CD8-positive, alpha-beta T cell (primary cell): ENCODE measurements at regions of chr7 and their contacts with region 1.

Region 1: DNA sequence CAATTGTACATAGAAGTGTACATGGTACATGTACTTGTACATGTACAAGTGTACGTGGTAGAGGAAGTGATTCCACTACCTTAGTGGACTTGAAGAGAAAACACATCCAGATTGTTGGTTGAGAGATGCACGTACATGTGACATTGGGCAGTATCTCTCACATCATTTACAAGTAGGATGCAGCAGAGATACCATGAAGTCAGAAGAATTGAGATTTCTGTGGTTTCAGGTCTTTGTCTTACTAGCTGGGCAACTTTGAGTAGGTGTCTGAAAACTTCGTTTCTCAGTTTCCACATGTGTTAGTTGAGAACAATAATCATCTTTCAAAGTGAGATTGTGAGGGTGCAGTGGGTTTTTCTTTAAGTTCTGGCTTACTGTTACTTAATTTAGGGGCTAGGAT is 21.5 kb downstream of the CLDN12 start:
- DNase-seq: no peak
- ATAC-seq: no peak
- H3K4me3 ChIP-seq: no peak overlapping the region
- H3K4me3 Mint-ChIP-seq: no peak overlapping the region
- H3K27ac ChIP-seq: no peak overlapping the region
- H3K27ac Mint-ChIP-seq: no peak overlapping the region
- H3K4me1 ChIP-seq: no peaks in the 10 kb centered on the region
- H3K4me1 Mint-ChIP-seq: no peaks in the 10 kb centered on the region
- H3K27me3 ChIP-seq: no peaks in the 10 kb centered on the region
- H3K27me3 Mint-ChIP-seq: peaks cover 2% of the 10 kb centered on the region
- CTCF ChIP-seq: no peak

Region 2: DNA sequence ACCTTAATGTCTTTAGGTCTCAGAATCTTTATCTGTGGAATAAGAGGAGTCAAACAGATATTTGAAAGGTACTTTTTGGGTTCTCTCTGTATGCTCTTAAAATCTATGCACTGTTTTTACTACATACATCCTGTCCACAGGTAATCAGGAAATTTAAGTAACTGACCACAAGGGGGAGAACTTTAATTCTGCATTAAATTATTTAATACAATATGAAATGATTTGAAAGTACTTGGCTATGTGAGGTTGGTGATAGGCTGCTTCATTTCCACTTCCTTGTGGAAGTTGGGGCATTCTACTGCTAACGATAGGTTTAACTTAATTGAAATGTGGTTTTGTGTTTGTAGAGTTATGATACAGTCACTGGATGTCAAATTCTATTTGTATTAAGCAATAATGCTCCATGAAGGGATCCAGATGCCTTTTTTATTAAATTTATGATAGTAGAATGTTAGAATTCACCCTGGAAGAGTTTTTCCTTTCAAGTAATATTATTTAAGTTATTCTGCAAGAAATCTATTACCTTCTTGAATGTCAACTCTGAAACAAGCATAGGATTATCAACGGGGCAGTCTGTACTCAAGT is 1635.1 kb before region 1 on chr7:
- CTCF ChIA-PET with region 1: no interaction called
- POLR2A ChIA-PET with region 1: no interaction called
- intact Hi-C with region 1: loop called in 1 of 2 experiments (anchors 5 kb)
- DNase-seq: peak in 2 of 9 experiments; percentile 6 to 26
- ATAC-seq: no peak
- H3K4me3 ChIP-seq: no peak overlapping the region
- H3K4me3 Mint-ChIP-seq: no peak overlapping the region
- H3K27ac ChIP-seq: no peak overlapping the region
- H3K27ac Mint-ChIP-seq: no peak overlapping the region
- H3K4me1 ChIP-seq: no peaks in the 10 kb centered on the region
- H3K4me1 Mint-ChIP-seq: no peaks in the 10 kb centered on the region
- H3K27me3 ChIP-seq: no peaks in the 10 kb centered on the region
- H3K27me3 Mint-ChIP-seq: no peaks in the 10 kb centered on the region
- CTCF ChIP-seq: peak; percentile 69

Region 3: DNA sequence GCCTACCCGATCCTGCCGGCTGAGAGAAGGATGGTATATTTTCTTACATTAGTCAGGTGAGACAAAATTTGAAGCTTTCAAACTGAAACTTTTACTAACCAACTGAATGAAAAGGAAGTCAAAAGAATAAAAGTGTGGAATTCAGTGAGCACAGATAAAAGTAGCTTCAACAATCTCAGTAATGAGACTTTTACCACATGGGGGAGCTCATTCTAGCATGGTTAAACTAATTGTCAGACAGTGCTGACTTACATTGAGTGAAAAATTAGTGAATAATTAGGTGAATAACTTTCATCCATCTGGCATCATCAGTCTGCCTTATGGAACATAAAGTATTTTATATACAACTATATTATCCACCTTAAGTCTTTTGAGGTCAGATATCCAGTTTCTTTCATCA is 112.0 kb before region 1 on chr7:
- CTCF ChIA-PET with region 1: interaction called, 18 read pairs
- POLR2A ChIA-PET with region 1: no interaction called
- intact Hi-C with region 1: loop called (anchors 1 kb)
- DNase-seq: peak in 2 of 9 experiments; percentile 22 to 27
- ATAC-seq: no peak
- H3K4me3 ChIP-seq: no peak overlapping the region
- H3K4me3 Mint-ChIP-seq: no peak overlapping the region
- H3K27ac ChIP-seq: no peak overlapping the region
- H3K27ac Mint-ChIP-seq: no peak overlapping the region
- H3K4me1 ChIP-seq: no peaks in the 10 kb centered on the region
- H3K4me1 Mint-ChIP-seq: no peaks in the 10 kb centered on the region
- H3K27me3 ChIP-seq: no peaks in the 10 kb centered on the region
- H3K27me3 Mint-ChIP-seq: peaks cover 31% of the 10 kb centered on the region
- CTCF ChIP-seq: peak; percentile 12

Region 4: GRCh38 chr7:90346336-90347125 is 78.2 kb before region 1 on chr7 and contains the start of gene GTPBP10:
- CTCF ChIA-PET with region 1: no interaction called
- POLR2A ChIA-PET with region 1: no interaction called
- intact Hi-C with region 1: no loop called
- DNase-seq: peak; percentile 91 to 98 (median 95)
- ATAC-seq: peak; percentile 93
- H3K4me3 ChIP-seq: peak within 1 kb of the TSS; percentile 77 to 81
- H3K4me3 Mint-ChIP-seq: peak within 1 kb of the TSS; percentile 98
- H3K27ac ChIP-seq: peak within 1 kb of the TSS; percentile 92 to 97
- H3K27ac Mint-ChIP-seq: peak within 1 kb of the TSS; percentile 100
- H3K4me1 ChIP-seq: peaks cover 22% of the 10 kb centered on the region
- H3K4me1 Mint-ChIP-seq: peaks cover 56% of the 10 kb centered on the region
- H3K27me3 ChIP-seq: no peaks in the 10 kb centered on the region
- H3K27me3 Mint-ChIP-seq: no peaks in the 10 kb centered on the region
- CTCF ChIP-seq: peak; percentile 71
- total RNA-seq, gene GTPBP10: 15.3 to 18.3 TPM

Region 5: DNA sequence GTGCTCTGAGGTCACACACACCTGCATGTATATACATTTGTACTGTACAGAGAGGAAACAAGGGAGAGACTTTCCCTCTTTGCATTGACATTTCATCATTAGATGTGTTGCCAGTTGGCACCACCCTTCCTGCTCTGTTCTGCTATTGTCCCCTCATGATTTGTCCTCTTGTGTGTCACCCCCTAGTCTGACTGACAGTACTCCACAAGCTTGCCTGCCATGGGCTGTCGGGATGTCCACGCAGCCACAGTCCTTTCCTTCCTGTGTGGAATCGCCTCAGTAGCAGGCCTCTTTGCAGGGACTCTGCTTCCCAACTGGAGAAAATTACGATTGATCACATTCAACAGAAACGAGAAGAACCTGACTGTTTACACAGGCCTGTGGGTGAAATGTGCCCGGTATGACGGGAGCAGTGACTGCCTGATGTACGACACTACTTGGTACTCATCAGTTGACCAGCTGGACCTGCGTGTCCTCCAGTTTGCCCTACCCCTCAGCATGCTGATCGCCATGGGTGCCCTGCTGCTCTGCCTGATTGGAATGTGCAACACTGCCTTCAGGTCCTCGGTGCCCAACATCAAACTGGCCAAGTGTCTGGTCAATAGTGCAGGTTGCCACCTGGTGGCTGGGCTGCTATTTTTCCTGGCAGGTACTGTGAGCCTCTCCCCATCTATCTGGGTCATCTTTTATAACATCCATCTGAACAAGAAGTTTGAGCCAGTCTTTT is 12.1 kb before region 1 on chr7:
- CTCF ChIA-PET with region 1: interaction called, 31 read pairs
- POLR2A ChIA-PET with region 1: no interaction called
- intact Hi-C with region 1: no loop called
- DNase-seq: peak in 5 of 9 experiments; percentile 17 to 44 (median 31)
- ATAC-seq: no peak
- H3K4me3 ChIP-seq: no peak overlapping the region
- H3K4me3 Mint-ChIP-seq: no peak overlapping the region
- H3K27ac ChIP-seq: no peak overlapping the region
- H3K27ac Mint-ChIP-seq: no peak overlapping the region
- H3K4me1 ChIP-seq: no peaks in the 10 kb centered on the region
- H3K4me1 Mint-ChIP-seq: no peaks in the 10 kb centered on the region
- H3K27me3 ChIP-seq: no peaks in the 10 kb centered on the region
- H3K27me3 Mint-ChIP-seq: no peaks in the 10 kb centered on the region
- CTCF ChIP-seq: no peak